WTC11 (cell line): ENCODE measurements at regions of chr17 and their contacts with region 1.

Region 1: DNA sequence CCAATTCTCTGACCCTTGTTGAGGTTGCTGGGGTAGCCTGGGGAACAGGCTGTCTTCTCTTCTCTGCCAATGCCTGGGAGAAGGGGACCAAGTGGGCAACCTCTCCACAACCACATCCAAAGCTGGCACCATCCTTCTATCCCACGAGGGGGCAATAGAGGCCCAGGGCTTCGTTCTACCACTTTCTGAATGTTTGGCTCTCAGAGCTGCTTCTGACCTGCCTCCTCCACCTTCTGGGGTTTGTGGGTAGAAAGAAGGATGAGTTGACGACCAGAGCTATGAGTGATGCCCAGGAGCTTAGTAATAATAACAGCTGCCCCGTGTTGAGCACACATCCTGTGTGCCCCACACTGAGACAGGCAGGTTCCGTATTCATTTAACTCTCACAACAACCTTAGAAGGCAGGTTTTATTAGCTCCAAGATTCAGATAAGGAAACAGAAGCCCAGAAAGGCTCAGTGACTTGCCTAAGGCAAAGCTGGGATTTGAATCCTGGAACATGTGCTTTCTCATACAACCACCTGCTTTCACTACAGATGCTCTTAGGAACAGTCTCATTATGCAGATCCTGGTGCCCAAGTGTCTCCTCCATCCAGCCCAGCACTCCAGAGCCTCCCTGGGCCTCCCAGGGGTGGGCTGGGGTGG is 11.1 kb downstream of the TSPOAP1 start:
- DNase-seq: peak; percentile 68
- ATAC-seq: peak; percentile 92
- H3K4me3 Mint-ChIP-seq: no peak overlapping the region
- H3K27ac Mint-ChIP-seq: no peak overlapping the region
- H3K4me1 Mint-ChIP-seq: peaks cover 3% of the 10 kb centered on the region
- H3K27me3 Mint-ChIP-seq: peaks cover 23% of the 10 kb centered on the region
- CTCF ChIP-seq: peak; percentile 49; the same call in 1 of the 2 replicates

Region 2: GRCh38 chr17:58284320-58285067 is 33.0 kb before region 1 on chr17:
- CTCF ChIA-PET with region 1: interaction called, 15 read pairs
- POLR2A ChIA-PET with region 1: no interaction called
- DNase-seq: peak; percentile 51
- ATAC-seq: peak; percentile 97
- H3K4me3 Mint-ChIP-seq: no peak overlapping the region
- H3K27ac Mint-ChIP-seq: 0 out of 2 replicates have a peak overlapping the region, but pooled peaks have one; percentile 17
- H3K4me1 Mint-ChIP-seq: peaks cover 20% of the 10 kb centered on the region
- H3K27me3 Mint-ChIP-seq: peaks cover 4% of the 10 kb centered on the region
- CTCF ChIP-seq: no peak

Region 3: DNA sequence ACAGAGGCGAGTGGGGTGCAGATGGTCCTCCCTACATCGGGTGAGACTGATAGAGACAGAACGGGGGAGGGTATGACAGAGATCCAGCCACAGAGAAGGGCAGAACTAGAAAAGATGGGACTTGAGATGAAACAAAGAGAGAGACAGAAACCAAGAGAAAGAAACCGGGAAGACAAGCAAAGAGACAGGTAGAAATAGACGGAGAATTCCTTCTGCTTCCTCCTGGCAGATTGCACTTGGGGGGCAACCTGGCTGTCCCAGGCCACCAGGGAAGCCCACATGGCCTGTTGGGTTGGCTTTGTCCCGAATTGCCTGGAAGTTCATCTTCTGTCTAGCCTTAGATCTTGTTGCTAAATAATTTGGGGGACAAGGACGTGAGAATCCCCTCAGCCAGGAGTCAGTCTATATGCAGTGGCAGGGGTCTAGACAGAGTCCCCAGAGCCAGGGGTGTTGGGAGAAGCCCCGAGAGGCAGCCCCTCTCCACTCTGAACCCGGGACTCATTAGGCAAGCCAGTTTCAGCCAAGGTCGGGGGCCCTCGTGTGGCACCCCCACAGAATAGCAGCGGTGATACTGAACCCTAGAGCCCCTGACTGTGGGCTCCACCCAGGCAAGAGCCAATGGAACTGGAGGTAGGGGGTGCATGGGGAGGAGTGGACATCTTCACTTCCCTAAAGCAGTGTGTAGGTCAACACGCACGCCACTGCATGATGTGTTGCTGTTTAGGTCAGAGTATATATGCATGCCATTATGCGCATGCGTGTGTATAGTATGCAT is 11.7 kb after region 1 on chr17:
- CTCF ChIA-PET with region 1: interaction called, 36 read pairs
- POLR2A ChIA-PET with region 1: no interaction called
- DNase-seq: peak; percentile 61
- ATAC-seq: peak; percentile 48
- H3K4me3 Mint-ChIP-seq: peak overlapping the region; percentile 41
- H3K27ac Mint-ChIP-seq: peak overlapping the region; percentile 44
- H3K4me1 Mint-ChIP-seq: peaks cover 57% of the 10 kb centered on the region
- H3K27me3 Mint-ChIP-seq: peaks cover 11% of the 10 kb centered on the region
- CTCF ChIP-seq: 0 out of 2 replicates have a peak, but pooled peaks have one; percentile 16

Region 4: GRCh38 chr17:58344047-58344790 is 26.7 kb after region 1 on chr17:
- CTCF ChIA-PET with region 1: interaction called, 22 read pairs
- POLR2A ChIA-PET with region 1: interaction called, 7 read pairs
- DNase-seq: no peak
- ATAC-seq: no peak
- H3K4me3 Mint-ChIP-seq: no peak overlapping the region
- H3K27ac Mint-ChIP-seq: no peak overlapping the region
- H3K4me1 Mint-ChIP-seq: peaks cover 8% of the 10 kb centered on the region
- H3K27me3 Mint-ChIP-seq: no peaks in the 10 kb centered on the region; the same call in 1 of the 2 replicates
- CTCF ChIP-seq: no peak

Region 5: DNA sequence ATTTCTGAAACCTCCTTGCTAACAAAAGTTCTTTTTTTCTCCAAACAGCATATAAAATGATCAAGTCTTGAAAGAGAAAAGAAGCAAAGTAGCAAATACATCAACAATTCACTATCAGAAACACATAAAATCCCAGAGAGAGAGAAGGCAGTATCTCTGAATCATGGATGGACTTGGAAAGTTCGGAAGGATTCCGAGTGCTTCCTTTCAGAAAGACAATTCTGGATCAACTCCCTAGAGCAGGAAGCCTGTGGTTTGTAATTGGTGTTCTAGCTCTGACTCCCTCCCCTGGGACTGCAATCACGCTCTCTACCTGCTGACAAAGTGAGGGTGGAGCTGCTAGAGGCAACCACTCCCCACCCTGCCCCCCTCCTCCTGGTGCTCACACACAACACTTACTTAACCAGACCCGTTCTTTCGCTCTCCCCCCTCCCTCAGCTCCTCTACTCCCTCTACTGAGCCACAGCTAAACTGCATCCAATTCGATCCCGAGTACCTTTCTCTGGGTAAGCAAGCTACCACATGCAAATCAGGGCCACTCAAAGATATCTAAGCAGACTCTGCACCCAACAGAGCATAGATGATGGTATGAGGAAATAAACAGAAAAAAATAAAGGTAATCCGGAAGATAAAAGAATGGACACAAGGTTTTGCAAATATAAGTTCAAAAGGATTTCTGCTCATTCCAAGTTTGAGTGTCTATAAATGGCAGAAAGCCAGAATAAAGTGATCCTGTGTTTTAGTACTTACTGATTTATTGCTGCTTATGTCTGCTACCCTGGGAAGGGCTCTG is 100.0 kb after region 1 on chr17 and contains the start of gene RNF43:
- CTCF ChIA-PET with region 1: interaction called, 75 read pairs
- POLR2A ChIA-PET with region 1: interaction called, 9 read pairs
- DNase-seq: peak; percentile 93
- ATAC-seq: peak; percentile 100
- H3K4me3 Mint-ChIP-seq: peak within 1 kb of the TSS; percentile 82
- H3K27ac Mint-ChIP-seq: peak within 1 kb of the TSS; percentile 92
- H3K4me1 Mint-ChIP-seq: peaks cover 28% of the 10 kb centered on the region
- H3K27me3 Mint-ChIP-seq: peaks cover 6% of the 10 kb centered on the region
- CTCF ChIP-seq: peak; percentile 56; the same call in 1 of the 2 replicates
- total RNA-seq, gene RNF43: 3.2 to 3.6 TPM (median 3.5 TPM) in 3 replicates

Region 6: DNA sequence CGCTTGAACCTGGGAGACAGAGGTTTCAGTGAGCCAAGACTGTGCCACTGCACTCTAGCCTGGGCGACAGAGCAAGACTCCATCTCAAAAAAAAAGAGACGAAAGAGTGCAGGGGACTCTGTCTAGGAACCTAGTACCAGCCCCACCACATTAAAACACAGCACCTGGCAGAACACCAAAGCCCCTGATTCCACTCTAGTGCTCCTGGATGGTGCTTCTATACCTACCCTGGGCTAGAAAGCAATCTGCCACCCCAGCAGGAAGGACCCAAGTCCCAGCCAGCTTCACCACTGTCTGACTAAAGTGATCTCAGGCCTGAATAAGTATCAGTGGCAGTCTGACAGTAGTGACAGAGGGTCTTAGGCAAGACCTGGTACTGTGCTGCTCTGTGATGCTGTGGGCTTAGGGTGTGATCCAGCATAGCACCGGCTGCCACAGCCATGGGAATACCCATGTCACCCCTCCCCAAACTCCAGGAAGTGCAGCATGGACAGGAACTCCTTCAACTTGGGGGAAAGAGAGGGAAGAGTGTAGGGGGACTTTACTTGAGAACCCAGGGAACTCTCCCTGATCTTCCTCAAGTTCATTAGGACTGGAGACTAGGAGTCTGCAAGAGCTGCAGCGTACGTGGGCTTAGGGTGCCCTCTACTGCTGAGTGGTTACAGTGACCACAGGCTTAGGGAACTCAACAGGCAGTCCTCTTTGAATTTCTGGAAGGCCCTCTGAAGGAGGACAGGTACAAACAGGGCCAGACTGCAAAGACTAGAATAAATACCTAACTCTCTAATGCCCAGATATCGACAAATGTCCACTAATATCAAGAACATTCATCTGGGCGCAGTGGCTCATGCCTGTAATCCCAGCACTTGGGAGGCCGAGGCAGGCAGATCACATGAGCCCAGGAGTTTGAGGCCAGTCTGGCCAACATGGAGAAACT is 129.8 kb after region 1 on chr17:
- CTCF ChIA-PET with region 1: interaction called, 57 read pairs
- POLR2A ChIA-PET with region 1: no interaction called
- DNase-seq: peak; percentile 89
- ATAC-seq: peak; percentile 98
- H3K4me3 Mint-ChIP-seq: no peak overlapping the region
- H3K27ac Mint-ChIP-seq: no peak overlapping the region
- H3K4me1 Mint-ChIP-seq: peaks cover 18% of the 10 kb centered on the region
- H3K27me3 Mint-ChIP-seq: no peaks in the 10 kb centered on the region
- CTCF ChIP-seq: peak; percentile 66

Region 7: DNA sequence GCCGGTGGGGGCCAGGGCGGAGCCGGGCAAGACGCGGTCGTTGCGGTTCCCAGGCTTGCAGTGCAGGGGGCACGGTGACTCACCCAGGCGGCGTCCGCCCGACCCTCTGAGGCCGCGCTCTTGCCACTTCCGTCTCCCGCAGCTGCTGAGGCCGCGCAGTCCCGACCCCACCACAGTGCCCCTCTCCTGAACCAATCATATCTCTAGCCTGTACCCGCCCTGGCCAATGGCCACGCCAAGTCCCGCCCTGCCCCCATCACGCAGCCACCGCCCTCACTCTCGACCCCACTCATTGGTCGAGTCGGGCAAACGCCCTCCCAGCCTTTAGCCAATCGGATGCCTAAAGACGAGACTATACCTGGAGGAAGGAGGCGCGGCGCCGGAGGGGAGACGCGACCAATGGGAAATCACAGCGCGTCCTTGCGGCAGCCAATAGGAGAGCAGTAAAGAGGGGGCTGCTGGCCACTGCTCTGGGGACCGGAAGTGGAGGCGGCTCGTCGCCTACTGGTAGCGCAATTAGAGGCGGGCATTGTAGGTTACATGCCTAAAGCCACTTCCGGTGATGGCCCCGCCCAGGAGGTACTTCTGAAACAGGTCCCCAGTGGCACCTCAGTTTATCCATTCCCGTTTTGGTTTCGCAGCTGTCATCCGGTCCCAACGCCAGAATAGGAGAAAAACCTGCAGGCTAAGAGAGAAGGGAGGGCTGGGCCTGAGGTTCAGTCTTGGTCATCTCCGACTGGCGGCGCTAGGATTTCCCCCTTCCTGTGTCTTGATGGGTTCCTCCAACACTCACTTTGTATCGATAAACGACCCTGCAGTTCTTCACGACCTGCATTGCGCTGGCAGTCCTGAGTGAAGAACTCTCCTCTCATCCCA is 200.4 kb after region 1 on chr17:
- CTCF ChIA-PET with region 1: interaction called, 10 read pairs
- POLR2A ChIA-PET with region 1: no interaction called
- DNase-seq: peak; percentile 99
- ATAC-seq: peak; percentile 78
- H3K4me3 Mint-ChIP-seq: peak overlapping the region; percentile 96
- H3K27ac Mint-ChIP-seq: peak overlapping the region; percentile 98
- H3K4me1 Mint-ChIP-seq: peaks cover 30% of the 10 kb centered on the region
- H3K27me3 Mint-ChIP-seq: no peaks in the 10 kb centered on the region; the same call in 1 of the 2 replicates
- CTCF ChIP-seq: no peak